ENCODE measurements at regions of chrX and their contacts with region 1.

Region 1: DNA sequence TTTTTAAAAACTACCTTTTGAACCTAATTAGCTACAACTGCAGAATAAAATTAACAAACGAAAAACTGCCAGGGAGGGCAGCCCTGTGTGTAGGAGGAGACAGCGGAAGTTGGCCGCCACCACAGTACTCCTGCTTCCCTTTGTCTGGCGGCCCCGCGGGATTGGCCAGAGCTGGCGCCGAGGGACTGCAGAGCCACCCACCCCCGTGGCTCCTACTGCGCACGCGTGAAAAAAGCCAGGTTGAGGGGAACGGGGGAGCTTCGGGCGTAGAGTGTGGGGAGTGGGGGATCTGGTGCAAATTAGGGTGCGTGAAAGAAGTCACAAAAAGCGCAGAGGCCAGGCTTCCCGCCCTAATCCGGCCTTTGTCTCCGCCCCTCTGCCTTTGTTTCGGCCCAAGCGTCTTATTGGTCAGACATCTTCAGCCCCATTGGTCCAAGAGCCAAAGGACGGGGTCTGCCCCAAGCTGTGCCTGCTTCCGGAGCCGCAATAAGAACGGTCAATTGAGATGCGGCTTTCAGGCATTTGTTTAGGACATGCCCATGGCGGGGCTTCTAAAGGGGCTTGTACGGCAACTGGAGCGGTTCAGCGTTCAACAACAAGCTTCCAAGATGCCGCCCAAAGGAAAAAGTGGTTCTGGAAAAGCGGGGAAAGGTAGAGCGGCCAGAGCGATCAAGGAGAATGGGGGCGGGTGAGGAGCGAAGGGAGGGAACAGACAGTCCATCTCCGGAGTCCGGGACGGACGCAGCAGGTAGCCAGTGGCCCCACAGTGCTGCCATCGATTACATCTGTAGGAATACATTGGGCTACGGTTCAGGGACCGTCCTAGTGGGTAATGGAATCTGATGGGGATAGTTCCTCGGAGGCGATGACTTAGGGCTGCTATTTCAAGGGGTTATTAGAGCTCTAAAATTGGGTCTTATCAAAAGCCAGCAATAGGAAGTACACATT is at the start of gene PIN4:
- DNase-seq: peak; percentile 97
- H3K4me3 ChIP-seq: peak within 1 kb of the TSS; percentile 71 to 88 (median 75)
- H3K27ac ChIP-seq: peak within 1 kb of the TSS; percentile 71
- H3K4me1 ChIP-seq: peaks cover 10% of the 10 kb centered on the region
- H3K27me3 ChIP-seq: no peaks in the 10 kb centered on the region
- CTCF ChIP-seq: no peak
- POLR2A ChIP-seq: no peak
- total RNA-seq, gene PIN4: 9.9 and 10.4 TPM in 2 replicates

Region 2: DNA sequence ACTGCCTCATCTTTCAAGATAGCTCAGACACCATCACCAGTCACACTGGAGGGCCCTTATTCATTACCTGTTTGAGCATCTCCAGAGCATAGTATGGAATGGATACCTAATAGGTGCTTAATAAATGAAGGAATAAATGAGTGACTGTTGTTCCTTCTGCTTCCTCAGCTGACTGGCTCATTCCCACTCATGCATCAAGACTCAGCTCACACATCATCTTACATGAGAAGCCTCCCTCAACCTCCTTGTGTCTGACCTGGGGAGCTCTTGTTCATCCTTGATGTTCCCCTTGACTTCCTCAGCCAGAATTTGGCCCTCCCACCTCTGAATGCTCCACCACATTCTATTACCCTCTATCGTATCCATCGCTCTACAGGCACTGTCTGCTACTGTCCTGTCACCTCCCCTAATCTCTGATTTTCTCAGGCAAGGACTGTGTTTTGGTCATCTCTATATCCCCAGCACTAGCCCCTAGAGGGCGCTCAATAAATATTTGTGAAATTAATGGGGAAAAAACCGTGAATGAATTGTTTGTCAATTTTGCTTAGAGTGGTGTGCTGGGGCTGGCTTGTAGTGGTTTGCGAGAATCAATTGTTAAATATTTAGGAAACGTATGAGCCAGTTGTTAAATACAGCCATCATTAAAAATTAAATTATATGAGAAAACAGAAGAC is 182.5 kb before region 1 on chrX:
- CTCF ChIA-PET with region 1: no interaction called
- POLR2A ChIA-PET with region 1: no interaction called
- dilution Hi-C with region 1: no loop called
- intact Hi-C with region 1: loop called (anchors 5 kb)
- DNase-seq: peak; percentile 36
- H3K4me3 ChIP-seq: no peak overlapping the region
- H3K27ac ChIP-seq: no peak overlapping the region
- H3K4me1 ChIP-seq: peaks cover 3% of the 10 kb centered on the region
- H3K27me3 ChIP-seq: no peaks in the 10 kb centered on the region
- CTCF ChIP-seq: peak; percentile 37 to 50
- POLR2A ChIP-seq: no peak

Region 3: GRCh38 chrX:72714476-72714916 is 533.0 kb after region 1 on chrX:
- CTCF ChIA-PET with region 1: no interaction called
- POLR2A ChIA-PET with region 1: no interaction called
- dilution Hi-C with region 1: no loop called
- intact Hi-C with region 1: no loop called
- DNase-seq: peak; percentile 68
- H3K4me3 ChIP-seq: peak overlapping the region; percentile 34 to 79 (median 44)
- H3K27ac ChIP-seq: peak overlapping the region; percentile 57
- H3K4me1 ChIP-seq: peaks cover 10% of the 10 kb centered on the region
- H3K27me3 ChIP-seq: no peaks in the 10 kb centered on the region
- CTCF ChIP-seq: peak in 1 of 2 donors; percentile 5
- POLR2A ChIP-seq: no peak

Measured in endothelial cell of umbilical vein (primary cell).